BJ (cell line): ENCODE measurements at regions of chr17 and their contacts with region 1.

Region 1: DNA sequence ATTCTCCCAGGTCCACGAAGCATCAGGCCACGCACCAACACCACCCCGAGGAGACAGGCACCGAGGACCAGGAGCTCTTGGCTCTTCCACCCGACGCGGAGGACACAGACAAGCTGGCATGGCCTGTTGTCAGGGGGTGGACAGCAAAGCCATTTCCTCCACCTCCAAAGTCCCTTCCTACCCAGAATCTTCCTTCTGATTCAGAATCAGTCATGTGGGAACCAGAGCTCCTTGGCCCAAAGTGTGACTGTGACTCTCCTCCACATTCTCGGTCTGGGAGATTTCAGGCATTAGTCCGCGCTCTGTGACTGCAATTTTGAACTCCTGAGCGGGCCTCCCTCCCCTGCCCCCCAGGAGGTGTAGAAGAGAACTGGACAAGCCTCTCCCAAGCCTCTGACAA is 9.2 kb downstream of the DNAH17 start:
- DNase-seq: no peak
- H3K4me3 ChIP-seq: no peak overlapping the region
- H3K27me3 ChIP-seq: peaks cover 6% of the 10 kb centered on the region
- CTCF ChIP-seq: no peak

Region 2: DNA sequence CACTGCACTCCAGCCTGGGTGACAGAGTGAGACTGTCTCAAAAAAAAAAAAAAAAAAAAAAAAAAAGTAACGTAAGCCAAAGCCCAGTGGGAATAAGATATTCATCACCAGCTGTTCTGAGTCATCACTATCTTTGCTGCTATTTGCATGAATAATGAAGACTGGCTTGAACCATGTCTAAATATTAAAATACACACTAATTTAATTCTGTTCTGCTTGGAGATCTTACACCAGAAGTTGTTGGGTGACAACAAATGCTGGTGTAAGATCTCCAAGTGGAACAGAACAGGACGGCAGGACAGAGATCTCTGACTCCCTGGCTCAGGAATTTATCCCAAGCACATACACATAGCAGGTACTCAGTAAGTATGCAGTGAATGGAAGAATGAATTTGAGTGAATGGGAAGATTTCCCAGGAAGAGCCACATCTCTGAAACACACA is 10.4 kb before region 1 on chr17:
- CTCF ChIA-PET with region 1: no interaction called
- POLR2A ChIA-PET with region 1: no interaction called
- DNase-seq: peak; percentile 26
- H3K4me3 ChIP-seq: no peak overlapping the region
- H3K27me3 ChIP-seq: peaks cover 1% of the 10 kb centered on the region
- CTCF ChIP-seq: no peak

Region 3: GRCh38 chr17:78583091-78583490 is 15.1 kb after region 1 on chr17:
- CTCF ChIA-PET with region 1: interaction called, 3 read pairs
- POLR2A ChIA-PET with region 1: interaction called, 10 read pairs
- DNase-seq: no peak
- H3K4me3 ChIP-seq: no peak overlapping the region
- H3K27me3 ChIP-seq: peaks cover 1% of the 10 kb centered on the region
- CTCF ChIP-seq: no peak